ENCODE measurements at regions of chrX and their contacts with region 1.

Region 1: GRCh38 chrX:107672955-107673378 is 44.7 kb downstream of the PRPS1 start:
- DNase-seq: peak; percentile 58 to 84
- H3K4me3 ChIP-seq: peak overlapping the region in 1 of 2 donors; percentile 4
- H3K27ac ChIP-seq: peak overlapping the region; percentile 90 to 95
- H3K4me1 ChIP-seq: peaks cover 2 to 23% of the 10 kb centered on the region in 2 donors
- H3K27me3 ChIP-seq: no peaks in the 10 kb centered on the region
- CTCF ChIP-seq: peak; percentile 49 to 63 (median 54)

Region 2: DNA sequence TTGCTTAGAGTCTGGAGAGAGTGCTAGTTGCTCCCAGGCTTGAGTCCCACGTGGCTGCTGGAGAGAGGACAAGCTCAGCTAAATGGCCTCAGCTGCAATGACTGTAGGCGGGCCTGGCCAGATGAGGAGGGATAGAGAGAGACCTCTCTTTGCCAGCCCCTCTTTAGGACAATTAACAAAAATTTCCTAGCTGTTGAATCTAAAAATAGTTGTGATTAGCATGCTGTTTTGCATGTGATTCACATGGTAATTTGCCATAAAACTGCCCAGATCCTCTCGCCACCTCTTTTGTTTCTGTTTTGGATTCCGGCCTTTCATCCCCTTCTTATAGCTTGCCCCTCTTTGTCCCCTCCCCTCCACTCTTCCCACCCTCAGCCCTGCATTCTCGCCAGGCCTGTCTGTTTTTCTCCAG is 73.5 kb before region 1 on chrX:
- intact Hi-C with region 1: no loop called
- DNase-seq: no peak
- H3K4me3 ChIP-seq: no peak overlapping the region
- H3K27ac ChIP-seq: no peak overlapping the region
- H3K4me1 ChIP-seq: no peaks in the 10 kb centered on the region
- H3K27me3 ChIP-seq: no peaks in the 10 kb centered on the region
- CTCF ChIP-seq: no peak

Region 3: GRCh38 chrX:107710617-107711391 is 37.8 kb after region 1 on chrX:
- intact Hi-C with region 1: loop called (anchors 1 kb)
- DNase-seq: peak; percentile 49 to 89
- H3K4me3 ChIP-seq: peak overlapping the region in 1 of 2 donors; percentile 12
- H3K27ac ChIP-seq: peak overlapping the region; percentile 96 to 97
- H3K4me1 ChIP-seq: peaks cover 3 to 9% of the 10 kb centered on the region in 2 donors
- H3K27me3 ChIP-seq: no peaks in the 10 kb centered on the region
- CTCF ChIP-seq: no peak

Region 4: GRCh38 chrX:107716816-107717700 is 44.1 kb after region 1 on chrX:
- intact Hi-C with region 1: loop called (anchors 1 kb)
- DNase-seq: peak; percentile 89 to 96
- H3K4me3 ChIP-seq: peak overlapping the region; percentile 74 to 87
- H3K27ac ChIP-seq: peak overlapping the region; percentile 96 to 97
- H3K4me1 ChIP-seq: peaks cover 0 to 4% of the 10 kb centered on the region in 2 donors
- H3K27me3 ChIP-seq: no peaks in the 10 kb centered on the region
- CTCF ChIP-seq: peak in 1 of 3 experiments; percentile 4

Region 5: GRCh38 chrX:107826238-107827029 is 153.5 kb after region 1 on chrX:
- intact Hi-C with region 1: loop called (anchors 5 kb)
- DNase-seq: peak in 1 of 2 donors; percentile 65
- H3K4me3 ChIP-seq: peak overlapping the region; percentile 57 to 73
- H3K27ac ChIP-seq: peak overlapping the region; percentile 93 to 98
- H3K4me1 ChIP-seq: no peaks in the 10 kb centered on the region
- H3K27me3 ChIP-seq: peaks cover 4% of the 10 kb centered on the region
- CTCF ChIP-seq: no peak